Dendritic cell treated with granulocyte-macrophage colony-stimulating factor and Interleukin-4, amounts not matched to agents 40 ng/mL and 50 ng/mL, for 4 days (primary cell): ENCODE measurements at regions of chr5 and their contacts with region 1.

Region 1: GRCh38 chr5:96256778-96257470 is 176.1 kb downstream of the PCSK1 start:
- H3K4me3 Mint-ChIP-seq: no peak overlapping the region
- H3K27ac Mint-ChIP-seq: no peak overlapping the region
- H3K4me1 Mint-ChIP-seq: peaks cover 17% of the 10 kb centered on the region
- H3K27me3 Mint-ChIP-seq: no peaks in the 10 kb centered on the region

Region 2: GRCh38 chr5:96175090-96175489 is 81.8 kb before region 1 on chr5:
- intact Hi-C with region 1: no loop called
- H3K4me3 Mint-ChIP-seq: no peak overlapping the region
- H3K27ac Mint-ChIP-seq: no peak overlapping the region
- H3K4me1 Mint-ChIP-seq: no peaks in the 10 kb centered on the region
- H3K27me3 Mint-ChIP-seq: peaks cover 2% of the 10 kb centered on the region

Region 3: GRCh38 chr5:96209829-96210228 is 47.1 kb before region 1 on chr5:
- intact Hi-C with region 1: loop called (anchors 5 kb)
- H3K4me3 Mint-ChIP-seq: no peak overlapping the region
- H3K27ac Mint-ChIP-seq: no peak overlapping the region
- H3K4me1 Mint-ChIP-seq: peaks cover 14% of the 10 kb centered on the region
- H3K27me3 Mint-ChIP-seq: no peaks in the 10 kb centered on the region